ENCODE measurements at regions of chr22 and their contacts with region 1.

Region 1: DNA sequence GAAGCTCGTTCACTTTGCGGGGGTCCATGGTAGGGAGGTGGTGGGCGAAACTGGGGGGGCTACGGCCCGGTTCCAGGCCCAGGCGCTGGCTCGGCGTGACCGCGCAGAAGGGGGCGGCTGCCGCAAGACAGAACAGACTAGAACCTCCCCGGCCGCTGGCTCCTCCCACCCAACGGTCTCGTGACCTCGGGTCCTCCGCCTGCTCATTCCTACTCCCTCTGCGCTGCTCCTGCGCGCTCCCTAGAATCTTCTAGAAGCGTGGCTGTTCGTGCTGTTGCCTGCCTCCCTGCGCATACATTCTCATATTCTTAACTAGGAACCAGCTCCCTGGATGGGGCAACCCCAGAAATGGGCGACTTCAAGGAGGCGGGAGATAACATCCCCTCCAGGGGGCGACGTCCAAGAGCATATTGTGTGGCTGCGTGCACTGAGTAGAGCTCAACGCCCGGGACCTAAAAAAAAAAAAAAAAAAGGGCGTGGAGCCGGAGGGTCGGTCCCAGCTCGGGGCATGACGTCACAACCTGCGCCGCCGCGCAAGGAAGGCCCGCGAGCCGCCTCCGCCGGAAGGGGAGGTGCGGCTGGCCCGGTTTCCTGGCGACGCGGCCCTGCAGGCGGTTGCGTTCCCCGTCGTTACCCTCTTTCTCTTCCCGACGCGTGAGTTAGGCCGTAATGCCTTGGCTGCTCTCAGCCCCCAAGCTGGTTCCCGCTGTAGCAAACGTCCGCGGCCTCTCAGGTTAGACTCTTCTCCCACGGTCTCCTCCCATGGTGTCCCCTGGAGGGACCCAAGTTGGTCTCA is at the starts of genes ST13 and XPNPEP3:
- DNase-seq: peak; percentile 91 to 98
- H3K4me3 ChIP-seq: peak within 1 kb of the TSS; percentile 73 to 99
- H3K27ac ChIP-seq: peak within 1 kb of the TSS; percentile 87 to 96
- H3K4me1 ChIP-seq: peaks cover 10 to 29% of the 10 kb centered on the region in 2 donors
- H3K27me3 ChIP-seq: no peaks in the 10 kb centered on the region
- CTCF ChIP-seq: no peak
- total RNA-seq, gene ST13: 46.0 TPM
- total RNA-seq, gene XPNPEP3: 1.1 TPM

Region 2: GRCh38 chr22:40818747-40819598 is 37.7 kb before region 1 on chr22 and contains the start of gene SLC25A17:
- intact Hi-C with region 1: loop called (anchors 1 kb)
- DNase-seq: peak; percentile 32 to 92
- H3K4me3 ChIP-seq: peak within 1 kb of the TSS; percentile 82 to 90
- H3K27ac ChIP-seq: peak within 1 kb of the TSS; percentile 74 to 78
- H3K4me1 ChIP-seq: peaks cover 0 to 13% of the 10 kb centered on the region in 2 donors
- H3K27me3 ChIP-seq: no peaks in the 10 kb centered on the region
- CTCF ChIP-seq: peak in 2 of 3 experiments; percentile 23 to 51
- total RNA-seq, gene SLC25A17: 62.1 TPM

Region 3: DNA sequence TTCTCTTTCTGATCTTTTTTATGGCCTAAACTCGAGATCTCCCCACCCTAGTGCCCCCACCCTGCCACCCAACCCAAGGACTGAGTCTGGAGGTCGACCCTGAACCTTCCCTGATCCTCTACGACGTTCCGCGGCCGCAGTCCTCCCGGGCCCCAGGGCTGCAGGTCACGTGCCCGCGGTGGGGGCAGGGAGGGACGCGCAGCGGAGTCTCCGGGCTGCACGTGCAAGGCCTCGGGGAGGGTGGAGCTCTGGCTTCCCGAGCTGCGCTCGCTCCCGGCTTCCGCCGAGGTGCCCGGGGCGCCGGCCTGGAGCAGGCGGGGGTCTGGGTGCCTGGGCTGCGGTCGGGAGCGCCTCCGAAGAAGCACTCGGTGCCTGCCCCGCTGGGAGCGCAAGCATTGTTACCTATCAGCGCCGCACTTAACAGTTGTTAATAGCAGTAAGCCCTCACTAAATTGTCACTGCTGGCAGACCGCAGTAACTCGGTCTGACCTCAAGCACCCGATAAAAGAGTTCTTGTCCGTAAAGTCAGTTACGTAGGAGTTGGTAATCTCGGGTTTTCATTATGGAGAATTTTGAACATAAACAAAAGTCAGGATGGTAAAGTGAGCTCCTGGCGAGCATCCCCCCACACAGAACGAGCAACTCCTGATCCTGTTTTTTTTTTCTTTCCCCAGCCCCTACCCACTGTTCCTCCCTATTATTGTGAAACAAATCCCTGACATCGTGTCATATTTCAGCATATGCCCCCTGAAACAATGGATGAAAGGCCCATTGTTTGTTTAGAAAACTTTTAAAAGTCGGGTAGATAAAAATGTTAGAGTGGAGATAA is 166.0 kb after region 1 on chr22:
- intact Hi-C with region 1: loop called (anchors 2 kb)
- DNase-seq: peak; percentile 59 to 94
- H3K4me3 ChIP-seq: peak overlapping the region; percentile 81 to 89
- H3K27ac ChIP-seq: peak overlapping the region; percentile 95 to 96
- H3K4me1 ChIP-seq: peaks cover 3% of the 10 kb centered on the region in 2 donors
- H3K27me3 ChIP-seq: no peaks in the 10 kb centered on the region
- CTCF ChIP-seq: no peak

Region 4: DNA sequence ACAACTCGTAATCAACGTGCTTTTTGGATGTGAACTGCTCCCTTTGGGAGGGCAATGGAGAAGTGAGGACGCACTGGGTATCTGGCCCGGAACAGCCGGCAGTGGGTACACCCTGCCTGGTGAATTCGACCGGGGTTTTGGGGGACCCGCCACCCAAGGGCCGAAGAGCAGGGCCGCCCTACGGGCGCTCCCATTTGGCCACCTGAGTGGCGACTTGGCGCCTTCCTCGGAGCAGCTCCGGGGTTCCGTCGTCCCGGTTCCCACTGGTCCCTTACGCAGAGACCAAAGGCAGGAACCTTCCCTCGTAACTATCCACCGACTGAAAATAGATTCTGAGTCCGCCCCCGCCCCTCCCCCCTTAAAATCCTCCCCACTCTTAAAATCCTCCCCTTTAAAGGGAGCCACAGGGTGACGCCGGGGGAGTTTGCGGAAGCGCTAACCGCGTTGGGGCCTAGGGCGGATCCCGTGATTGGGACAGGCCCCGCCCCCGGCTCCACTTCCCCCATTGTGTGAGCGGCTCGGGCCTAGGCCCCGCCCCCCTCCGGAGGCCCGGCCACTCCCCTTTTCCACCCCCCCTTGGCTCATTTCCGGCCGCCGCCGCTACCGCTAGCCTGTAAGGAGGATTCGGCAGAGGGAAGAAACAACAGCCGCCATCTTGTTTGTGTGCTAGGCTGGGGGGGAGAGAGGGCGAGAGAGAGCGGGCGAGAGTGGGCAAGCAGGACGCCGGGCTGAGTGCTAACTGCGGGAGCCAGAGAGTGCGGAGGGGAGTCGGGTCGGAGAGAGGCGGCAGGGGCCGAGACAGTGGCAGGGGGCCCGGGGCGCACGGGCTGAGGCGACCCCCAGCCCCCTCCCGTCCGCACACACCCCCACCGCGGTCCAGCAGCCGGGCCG is 234.7 kb after region 1 on chr22:
- intact Hi-C with region 1: loop called (anchors 2 kb)
- DNase-seq: peak; percentile 96 to 100
- H3K4me3 ChIP-seq: peak overlapping the region; percentile 84 to 94
- H3K27ac ChIP-seq: peak overlapping the region; percentile 99 to 100
- H3K4me1 ChIP-seq: peaks cover 0 to 4% of the 10 kb centered on the region in 2 donors
- H3K27me3 ChIP-seq: no peaks in the 10 kb centered on the region
- CTCF ChIP-seq: no peak

Region 5: DNA sequence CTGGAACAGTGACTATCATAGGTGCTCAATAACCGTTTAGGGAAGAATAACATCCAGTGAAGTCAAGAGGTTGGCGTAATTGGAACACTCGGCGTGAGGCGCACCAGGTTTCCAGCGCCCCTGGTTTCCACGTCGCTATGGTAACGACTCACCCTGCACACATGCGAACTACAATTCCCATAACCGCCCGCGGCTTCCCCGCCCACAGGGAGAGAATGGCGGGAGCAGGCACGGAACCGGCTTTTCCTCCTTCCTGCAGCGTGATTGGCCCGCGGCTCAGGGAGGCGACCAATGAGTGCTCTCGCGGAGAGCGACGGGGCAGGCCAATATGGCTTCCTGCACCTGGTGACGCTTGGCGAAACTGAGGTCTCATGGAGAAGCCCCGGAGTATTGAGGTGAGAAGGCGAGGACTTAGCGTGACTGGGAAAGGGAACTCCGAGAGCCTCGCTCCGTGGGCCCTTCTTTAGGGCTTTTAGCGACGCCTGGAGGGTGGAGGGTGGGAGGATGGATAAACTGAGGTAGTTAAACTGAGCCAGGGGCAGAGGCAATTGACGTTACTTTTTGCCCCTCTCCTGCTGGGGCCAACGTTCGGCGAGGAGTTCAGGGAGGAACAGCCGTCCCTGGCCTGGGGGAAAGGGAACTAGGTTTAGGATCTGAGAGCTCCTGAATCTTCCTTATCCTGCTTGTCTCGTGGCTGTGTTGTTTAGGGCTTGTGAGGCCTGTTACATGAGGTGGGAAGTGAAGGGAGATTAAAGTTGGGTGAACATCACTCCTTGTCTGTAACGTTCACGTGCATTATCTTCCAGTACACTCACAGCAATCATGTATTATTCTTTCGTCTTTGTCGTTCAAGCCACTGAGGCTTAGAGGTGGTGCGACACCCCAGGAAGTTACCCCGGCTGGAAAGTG is 348.5 kb after region 1 on chr22 and contains the start of gene L3MBTL2:
- intact Hi-C with region 1: loop called (anchors 2 kb)
- DNase-seq: peak; percentile 95 to 99
- H3K4me3 ChIP-seq: peak within 1 kb of the TSS; percentile 63 to 89
- H3K27ac ChIP-seq: peak within 1 kb of the TSS; percentile 72 to 73
- H3K4me1 ChIP-seq: peaks cover 4 to 5% of the 10 kb centered on the region in 2 donors
- H3K27me3 ChIP-seq: no peaks in the 10 kb centered on the region
- CTCF ChIP-seq: no peak
- total RNA-seq, gene L3MBTL2: 33.3 TPM

Region 6: DNA sequence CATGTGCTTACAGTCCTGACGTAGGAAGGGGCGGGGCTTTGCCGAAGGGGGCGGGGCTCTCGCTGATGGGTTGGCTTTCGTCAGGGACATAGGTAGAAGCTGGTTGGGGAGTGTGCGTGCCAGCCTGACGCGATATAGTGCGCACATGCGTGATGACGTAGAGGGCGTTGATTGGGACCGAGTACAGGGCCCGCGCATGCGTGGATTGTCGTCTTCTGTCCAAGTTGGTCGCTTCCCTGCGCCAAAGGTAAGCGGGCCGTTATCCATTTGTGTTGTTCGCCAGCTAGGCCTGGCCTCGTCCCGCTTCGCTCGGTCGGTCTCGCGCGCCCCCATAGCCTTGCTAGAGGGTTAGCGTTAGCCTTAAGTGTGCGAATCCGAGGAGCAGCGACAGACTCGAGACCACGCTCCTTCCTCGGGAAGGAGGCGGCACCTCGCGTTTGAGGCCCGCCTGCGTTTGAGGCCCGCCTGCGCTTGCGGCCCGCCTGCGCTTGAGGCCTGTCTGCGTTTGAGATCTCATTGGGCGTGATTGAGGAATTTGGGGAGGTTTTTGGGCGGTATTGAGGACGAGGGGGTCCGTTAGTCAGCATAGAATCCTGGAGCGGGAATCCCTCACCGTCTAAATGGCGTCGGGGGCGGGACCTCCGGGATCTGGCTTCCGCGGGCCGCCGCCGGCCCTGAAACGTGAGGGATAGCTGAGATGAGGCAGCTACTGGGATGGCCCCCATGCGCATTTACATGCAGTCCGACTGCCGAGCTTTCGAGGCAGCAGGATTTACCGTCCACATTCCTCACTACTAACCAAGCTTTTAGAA is 764.6 kb after region 1 on chr22 and contains the start of gene XRCC6:
- intact Hi-C with region 1: loop called (anchors 5 kb)
- DNase-seq: peak; percentile 100
- H3K4me3 ChIP-seq: peak within 1 kb of the TSS; percentile 86 to 91
- H3K27ac ChIP-seq: peak within 1 kb of the TSS; percentile 95 to 96
- H3K4me1 ChIP-seq: peaks cover 4 to 20% of the 10 kb centered on the region in 2 donors
- H3K27me3 ChIP-seq: no peaks in the 10 kb centered on the region
- CTCF ChIP-seq: no peak
- total RNA-seq, gene XRCC6: 89.7 TPM

Measured in ascending aorta (tissue), 2 donors.